H1 (cell line): ENCODE measurements at regions of chr7 and their contacts with region 1.

Region 1: GRCh38 chr7:74164985-74165456 is 9.1 kb upstream of the EIF4H start:
- DNase-seq: peak in 1 of 2 experiments; percentile 56
- H3K4me3 ChIP-seq: no peak overlapping the region
- H3K27ac ChIP-seq: no peak overlapping the region
- H3K4me1 ChIP-seq: no peaks in the 10 kb centered on the region
- H3K27me3 ChIP-seq: no peaks in the 10 kb centered on the region
- CTCF ChIP-seq: peak; percentile 23 to 72 (median 51)
- EP300 ChIP-seq: no peak
- POLR2A ChIP-seq: no peak
- RAD21 ChIP-seq: peak; percentile 48 to 62; a peak in 3 of 4 replicates

Region 2: GRCh38 chr7:74133671-74134048 is 31.4 kb before region 1 on chr7:
- CTCF ChIA-PET with region 1: interaction called, 10 read pairs
- POLR2A ChIA-PET with region 1: interaction called, 5 read pairs
- DNase-seq: peak; percentile 49 to 71
- H3K4me3 ChIP-seq: no peak overlapping the region
- H3K27ac ChIP-seq: no peak overlapping the region
- H3K4me1 ChIP-seq: peaks cover 0 to 6% (median 0%) of the 10 kb centered on the region in 4 experiments; a peak in 2 of 7 replicates
- H3K27me3 ChIP-seq: no peaks in the 10 kb centered on the region
- CTCF ChIP-seq: no peak
- EP300 ChIP-seq: no peak
- POLR2A ChIP-seq: no peak
- RAD21 ChIP-seq: no peak

Region 3: DNA sequence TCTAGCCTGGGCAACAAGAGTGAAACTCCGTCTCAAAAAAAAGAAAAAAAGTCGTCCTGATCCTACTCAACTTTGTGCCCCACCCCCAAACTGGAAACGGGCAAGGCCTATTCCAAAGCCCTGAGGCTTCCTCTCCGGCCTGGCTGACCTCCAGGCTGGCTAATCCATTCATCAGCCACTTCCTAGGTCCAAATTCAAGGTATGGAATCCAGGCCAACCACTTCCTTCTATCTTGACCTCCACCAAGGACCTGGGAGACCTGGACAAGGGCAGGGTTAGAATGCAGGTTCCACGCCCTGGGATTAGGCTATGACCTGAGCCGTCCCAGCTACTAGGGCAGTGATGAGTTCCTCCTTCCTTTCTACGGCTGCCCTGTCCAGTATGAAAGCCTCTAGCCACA is 11.3 kb before region 1 on chr7:
- CTCF ChIA-PET with region 1: interaction called, 22 read pairs
- POLR2A ChIA-PET with region 1: interaction called, 5 read pairs
- DNase-seq: no peak
- H3K4me3 ChIP-seq: no peak overlapping the region
- H3K27ac ChIP-seq: no peak overlapping the region
- H3K4me1 ChIP-seq: no peaks in the 10 kb centered on the region
- H3K27me3 ChIP-seq: no peaks in the 10 kb centered on the region
- CTCF ChIP-seq: no peak
- EP300 ChIP-seq: no peak
- POLR2A ChIP-seq: no peak
- RAD21 ChIP-seq: no peak

Region 4: GRCh38 chr7:74289018-74289658 is 124.1 kb after region 1 on chr7 and contains the start of gene CLIP2:
- CTCF ChIA-PET with region 1: no interaction called
- POLR2A ChIA-PET with region 1: no interaction called
- DNase-seq: peak in 1 of 2 experiments; percentile 82
- H3K4me3 ChIP-seq: peak within 1 kb of the TSS; percentile 79 to 97 (median 84)
- H3K27ac ChIP-seq: no peak within 1 kb of the TSS
- H3K4me1 ChIP-seq: peaks cover 9 to 44% (median 29%) of the 10 kb centered on the region in 4 experiments
- H3K27me3 ChIP-seq: peaks cover 0 to 4% (median 0%) of the 10 kb centered on the region in 4 experiments; a peak in 3 of 7 replicates
- CTCF ChIP-seq: no peak
- EP300 ChIP-seq: no peak
- POLR2A ChIP-seq: peak in 1 of 2 experiments; percentile 34; a peak in 1 of 3 replicates
- RAD21 ChIP-seq: no peak; a peak in 1 of 4 replicates
- total RNA-seq, gene CLIP2: 39.8 and 41.5 TPM in 2 replicates